Aorta (tissue), 5 donors: ENCODE measurements at regions of chr3 and their contacts with region 1.

Region 1: DNA sequence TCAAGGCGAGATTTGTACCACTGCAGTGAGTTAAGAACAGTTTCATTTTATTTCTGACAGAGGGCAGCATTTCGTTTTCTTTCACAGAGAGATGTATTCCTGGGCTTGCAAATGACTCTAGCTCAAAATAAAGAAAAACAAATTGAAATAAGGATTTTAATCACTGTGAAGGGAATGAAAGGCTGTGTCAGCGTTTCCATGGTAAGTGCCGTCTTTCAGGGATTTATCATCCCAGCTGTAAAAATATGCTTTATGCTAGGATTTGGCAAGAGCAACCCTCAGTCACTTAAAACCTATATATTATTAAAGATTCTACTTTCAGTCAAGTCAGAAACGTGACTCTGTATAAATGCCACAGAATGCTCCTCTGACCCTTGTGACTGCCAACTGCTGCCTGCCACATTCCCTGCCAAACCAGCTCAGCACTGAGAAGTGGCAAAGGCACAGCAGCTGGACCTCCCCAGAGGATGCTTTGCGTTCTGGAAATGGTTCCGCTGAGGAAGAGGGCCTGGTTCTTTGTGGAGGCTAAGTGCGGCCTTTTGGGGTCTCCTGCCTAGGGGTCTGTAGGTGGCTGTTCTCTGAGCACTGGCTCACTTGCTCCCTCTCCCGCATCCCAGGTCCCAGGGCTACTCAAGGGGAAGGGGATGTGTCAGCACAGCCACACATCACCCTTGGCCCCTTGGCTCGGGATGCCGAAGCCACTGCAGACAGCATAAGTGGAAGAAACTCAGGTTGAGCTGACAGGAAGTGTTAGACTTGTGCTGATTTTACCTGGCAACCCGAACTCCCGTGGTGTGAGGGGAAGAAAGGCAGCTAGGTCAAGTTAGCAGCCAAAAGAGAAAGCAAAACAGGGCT is 56.6 kb upstream of the POMGNT2 start:
- DNase-seq: no peak
- ATAC-seq: no peak
- H3K4me3 ChIP-seq: no peak overlapping the region
- H3K27ac ChIP-seq: no peak overlapping the region
- H3K4me1 ChIP-seq: no peaks in the 10 kb centered on the region
- H3K27me3 ChIP-seq: no peaks in the 10 kb centered on the region

Region 2: DNA sequence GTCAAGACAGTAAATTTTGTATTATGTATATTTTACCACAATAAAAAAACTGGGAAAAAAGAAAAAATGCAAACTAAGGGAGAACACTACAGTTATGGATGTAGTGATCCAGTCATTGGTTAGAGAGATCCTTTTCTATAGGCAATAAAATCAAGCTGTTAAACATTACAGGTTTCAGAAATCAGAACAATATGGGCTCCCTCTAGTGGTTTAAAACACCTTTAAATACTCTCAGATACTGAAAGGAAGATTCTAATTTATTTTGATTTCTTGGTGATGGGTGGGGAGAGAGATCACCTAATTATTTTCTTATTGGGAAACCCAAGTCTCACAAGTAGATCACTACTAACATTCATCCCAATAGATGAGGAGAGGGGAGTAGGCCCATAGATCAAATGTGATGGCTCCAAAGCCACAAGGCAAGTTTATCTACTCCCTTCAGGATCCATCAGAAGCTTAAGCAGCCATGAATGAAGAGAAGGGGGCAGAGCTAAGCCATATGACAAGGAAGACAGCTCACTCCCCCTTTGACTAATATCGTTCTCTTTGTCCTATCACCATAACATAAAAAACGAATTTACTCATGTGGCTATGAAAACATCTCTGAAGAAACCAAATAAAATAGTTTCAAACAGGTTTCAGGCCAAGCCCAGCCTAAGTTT is 340.7 kb after region 1 on chr3:
- intact Hi-C with region 1: loop called in 1 of 2 experiments (anchors 10 kb)
- DNase-seq: no peak
- ATAC-seq: no peak
- H3K4me3 ChIP-seq: no peak overlapping the region
- H3K27ac ChIP-seq: no peak overlapping the region
- H3K4me1 ChIP-seq: no peaks in the 10 kb centered on the region
- H3K27me3 ChIP-seq: no peaks in the 10 kb centered on the region